Endothelial cell of umbilical vein (primary cell): ENCODE measurements at regions of chr1 and their contacts with region 1.

Region 1: GRCh38 chr1:110495926-110496600 is 22.9 kb downstream of the KCNA10 start:
- DNase-seq: peak; percentile 75
- H3K4me3 ChIP-seq: no peak overlapping the region
- H3K27ac ChIP-seq: no peak overlapping the region
- H3K4me1 ChIP-seq: no peaks in the 10 kb centered on the region
- H3K27me3 ChIP-seq: peaks cover 0 to 7% of the 10 kb centered on the region in 2 experiments
- CTCF ChIP-seq: peak; percentile 77 to 85
- POLR2A ChIP-seq: no peak

Region 2: GRCh38 chr1:109827466-109827865 is 668.6 kb before region 1 on chr1:
- CTCF ChIA-PET with region 1: no interaction called
- POLR2A ChIA-PET with region 1: no interaction called
- dilution Hi-C with region 1: no loop called
- intact Hi-C with region 1: no loop called
- DNase-seq: no peak
- H3K4me3 ChIP-seq: no peak overlapping the region
- H3K27ac ChIP-seq: no peak overlapping the region
- H3K4me1 ChIP-seq: no peaks in the 10 kb centered on the region
- H3K27me3 ChIP-seq: no peaks in the 10 kb centered on the region
- CTCF ChIP-seq: no peak
- POLR2A ChIP-seq: no peak

Region 3: DNA sequence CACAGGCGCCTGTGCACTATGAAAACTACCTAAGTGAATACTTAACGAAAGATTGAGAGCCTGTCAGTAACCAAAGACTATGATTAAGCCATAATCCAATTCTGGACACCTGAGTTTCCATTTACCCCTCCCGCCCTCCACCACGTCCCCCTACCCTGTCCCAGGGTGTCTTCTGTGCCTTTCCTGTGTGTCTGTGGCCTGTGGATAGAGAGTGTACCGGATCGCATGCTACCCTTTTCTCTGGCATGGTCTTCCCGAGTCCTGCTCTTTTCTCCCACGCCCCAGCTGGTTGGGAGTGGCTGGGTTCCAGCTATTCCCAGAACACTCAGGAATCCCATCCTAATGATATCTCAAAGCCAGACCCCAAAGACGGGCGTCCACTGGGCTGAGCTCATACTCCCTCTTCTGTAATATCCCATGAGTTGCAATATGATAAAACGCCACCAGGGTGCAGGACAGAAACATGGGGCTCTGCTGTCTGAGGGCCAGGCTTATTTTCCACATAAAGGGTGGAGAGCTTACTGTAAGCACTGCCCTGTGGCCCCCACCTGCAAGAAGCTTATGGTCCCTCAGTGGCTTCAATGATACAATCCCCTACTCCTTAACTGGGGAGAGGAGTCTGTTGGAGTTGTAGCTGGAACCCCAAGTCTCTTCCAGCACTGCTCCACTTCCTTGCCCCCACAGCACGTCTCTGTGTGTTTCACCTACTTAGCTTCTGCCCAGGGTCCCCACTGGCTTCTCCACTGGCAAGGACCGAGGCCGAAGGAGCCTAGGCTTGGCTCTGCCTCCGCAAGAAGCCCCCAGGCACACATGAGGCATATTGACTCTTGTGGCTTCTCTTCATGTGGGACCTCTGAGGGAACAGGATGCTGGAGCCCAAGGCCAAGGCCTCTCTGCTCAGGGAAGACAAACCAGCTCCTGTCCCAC is 408.0 kb before region 1 on chr1:
- CTCF ChIA-PET with region 1: interaction called, 31 read pairs
- POLR2A ChIA-PET with region 1: no interaction called
- dilution Hi-C with region 1: no loop called
- intact Hi-C with region 1: no loop called
- DNase-seq: peak; percentile 53
- H3K4me3 ChIP-seq: no peak overlapping the region
- H3K27ac ChIP-seq: no peak overlapping the region
- H3K4me1 ChIP-seq: peaks cover 6% of the 10 kb centered on the region
- H3K27me3 ChIP-seq: peaks cover 49% of the 10 kb centered on the region in 2 experiments
- CTCF ChIP-seq: peak; percentile 57 to 66
- POLR2A ChIP-seq: no peak

Region 4: DNA sequence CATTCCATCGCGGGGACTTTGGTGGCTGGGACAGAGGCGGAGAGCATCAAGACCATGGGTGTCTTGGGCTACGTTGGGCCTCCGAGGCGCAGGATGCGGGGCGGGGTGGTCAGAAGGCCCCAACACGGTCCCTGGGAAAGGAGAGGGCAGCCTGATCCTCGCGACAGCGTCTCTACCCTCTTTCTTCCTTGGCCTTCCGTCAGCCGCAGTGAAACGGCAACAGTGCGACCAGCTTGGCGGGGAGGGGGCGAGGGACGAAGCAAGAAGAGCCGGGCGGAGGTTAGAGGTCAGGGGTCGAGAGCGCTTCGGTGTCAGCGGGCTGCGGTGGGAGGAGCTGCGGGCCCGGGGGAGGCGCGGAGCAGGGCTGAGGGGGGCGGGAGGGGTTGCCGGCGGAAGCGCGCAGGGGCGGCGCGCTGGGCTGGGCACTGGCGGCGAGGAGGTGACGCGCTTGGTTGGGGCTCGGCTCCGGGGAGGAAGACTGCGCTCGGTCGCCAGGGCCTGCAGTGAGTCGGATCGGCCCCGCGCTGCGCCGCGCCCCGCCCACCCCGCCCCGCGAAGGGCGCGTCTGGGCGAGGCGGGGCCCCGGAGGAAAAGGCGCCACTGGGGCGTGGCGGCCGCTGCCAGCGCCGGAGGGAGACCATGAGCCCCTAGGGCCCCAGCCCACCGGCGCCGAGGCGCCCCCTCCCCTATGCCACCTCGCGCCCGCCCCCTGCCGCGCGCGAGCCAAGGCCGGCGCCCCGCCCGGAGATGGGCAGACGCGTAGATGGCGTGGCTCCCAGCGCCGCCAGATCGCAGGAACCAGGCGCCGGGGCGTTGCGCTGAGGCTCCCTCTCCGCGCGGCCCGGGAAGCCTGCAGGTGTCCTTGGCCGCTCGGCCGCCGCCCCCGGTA is 286.1 kb before region 1 on chr1 and contains the start of gene KCNC4:
- CTCF ChIA-PET with region 1: interaction called, 136 read pairs
- POLR2A ChIA-PET with region 1: no interaction called
- dilution Hi-C with region 1: no loop called
- intact Hi-C with region 1: no loop called
- DNase-seq: peak; percentile 81
- H3K4me3 ChIP-seq: peak within 1 kb of the TSS; percentile 43 to 65 (median 61)
- H3K27ac ChIP-seq: no peak within 1 kb of the TSS
- H3K4me1 ChIP-seq: peaks cover 5% of the 10 kb centered on the region
- H3K27me3 ChIP-seq: peaks cover 0 to 6% of the 10 kb centered on the region in 2 experiments
- CTCF ChIP-seq: no peak
- POLR2A ChIP-seq: no peak
- total RNA-seq, gene KCNC4: 12.3 and 22.5 TPM in 2 replicates

Region 5: DNA sequence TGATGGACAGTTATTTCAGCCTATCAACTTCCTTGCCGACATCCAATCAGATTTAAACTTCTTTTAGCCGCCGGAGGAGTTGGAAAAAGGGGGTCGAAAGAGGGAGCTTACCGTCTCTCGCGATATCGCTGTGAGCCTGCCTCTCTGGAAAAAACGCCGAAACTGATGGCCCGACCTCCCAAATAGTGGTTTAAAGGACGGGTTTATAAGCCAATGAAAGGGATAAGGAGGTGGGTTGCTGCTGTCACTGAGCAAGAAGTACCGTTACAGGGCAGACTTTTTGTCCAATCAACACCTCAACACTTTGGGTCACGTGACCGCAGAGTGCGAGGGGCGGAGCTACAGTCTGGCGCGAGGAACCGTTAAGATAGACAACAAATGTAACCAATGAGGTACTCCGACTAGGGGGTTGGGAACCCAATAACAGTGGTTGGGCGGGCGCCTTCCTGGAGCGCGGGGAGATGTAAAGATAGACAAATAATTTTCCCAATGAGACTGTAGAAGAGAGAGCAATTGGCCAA is 157.1 kb before region 1 on chr1 and contains the start of gene RBM15:
- CTCF ChIA-PET with region 1: interaction called, 13 read pairs
- POLR2A ChIA-PET with region 1: interaction called, 3 read pairs
- dilution Hi-C with region 1: no loop called
- intact Hi-C with region 1: no loop called
- DNase-seq: peak; percentile 100
- H3K4me3 ChIP-seq: peak within 1 kb of the TSS; percentile 83 to 91 (median 84)
- H3K27ac ChIP-seq: peak within 1 kb of the TSS; percentile 88
- H3K4me1 ChIP-seq: peaks cover 37% of the 10 kb centered on the region
- H3K27me3 ChIP-seq: no peaks in the 10 kb centered on the region
- CTCF ChIP-seq: no peak
- POLR2A ChIP-seq: no peak
- total RNA-seq, gene RBM15: 26.9 and 29.5 TPM in 2 replicates

Region 6: DNA sequence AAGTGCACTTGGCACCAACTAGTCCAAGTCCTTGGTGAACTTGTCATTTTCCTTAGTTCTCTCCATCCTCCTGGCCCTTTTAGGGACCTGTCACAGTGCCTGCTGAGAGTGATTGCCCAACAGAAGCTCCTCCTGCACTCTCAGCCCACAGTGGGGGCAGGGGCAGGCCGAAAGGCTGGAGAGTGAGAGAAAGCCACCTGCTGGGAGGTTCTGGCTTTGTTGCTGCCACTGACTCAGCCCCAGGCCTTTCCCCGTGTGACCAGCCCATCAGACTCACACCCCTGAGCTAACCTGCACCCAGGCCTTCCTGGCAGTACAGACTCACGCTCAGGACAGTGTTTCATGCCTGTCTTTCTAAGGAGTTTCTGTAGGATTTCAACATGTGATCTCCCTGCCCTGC is 62.3 kb before region 1 on chr1:
- CTCF ChIA-PET with region 1: interaction called, 12 read pairs
- POLR2A ChIA-PET with region 1: no interaction called
- dilution Hi-C with region 1: no loop called
- intact Hi-C with region 1: no loop called
- DNase-seq: no peak
- H3K4me3 ChIP-seq: no peak overlapping the region
- H3K27ac ChIP-seq: no peak overlapping the region
- H3K4me1 ChIP-seq: no peaks in the 10 kb centered on the region
- H3K27me3 ChIP-seq: peaks cover 9 to 16% of the 10 kb centered on the region in 2 experiments
- CTCF ChIP-seq: no peak
- POLR2A ChIP-seq: no peak

Region 7: DNA sequence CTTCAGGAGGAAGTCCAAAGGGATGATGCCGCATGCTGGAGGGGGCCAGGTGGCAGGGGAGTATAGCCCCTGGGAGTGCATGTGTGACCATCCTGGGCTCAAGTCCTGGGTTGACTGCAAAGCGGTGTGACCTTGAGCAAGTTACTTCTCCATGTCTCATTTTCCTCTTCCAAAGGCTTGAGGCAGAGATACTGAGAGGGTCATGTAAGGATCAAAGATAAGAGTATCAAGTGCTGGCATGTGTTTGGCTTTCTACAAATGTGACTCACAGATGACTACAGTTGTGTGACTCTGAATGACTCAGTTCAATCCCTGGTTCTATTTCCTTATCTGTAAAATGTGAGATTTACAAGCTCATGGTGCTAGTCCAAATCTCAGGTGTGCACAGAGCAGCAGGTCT is 19.0 kb before region 1 on chr1:
- CTCF ChIA-PET with region 1: interaction called, 68 read pairs
- POLR2A ChIA-PET with region 1: no interaction called
- dilution Hi-C with region 1: no loop called
- intact Hi-C with region 1: no loop called
- DNase-seq: peak; percentile 62
- H3K4me3 ChIP-seq: no peak overlapping the region
- H3K27ac ChIP-seq: no peak overlapping the region
- H3K4me1 ChIP-seq: peaks cover 13% of the 10 kb centered on the region
- H3K27me3 ChIP-seq: peaks cover 0 to 3% of the 10 kb centered on the region in 2 experiments
- CTCF ChIP-seq: no peak
- POLR2A ChIP-seq: no peak

Region 8: GRCh38 chr1:110513511-110513910 is 17.4 kb after region 1 on chr1:
- CTCF ChIA-PET with region 1: interaction called, 17 read pairs
- POLR2A ChIA-PET with region 1: no interaction called
- dilution Hi-C with region 1: no loop called
- intact Hi-C with region 1: no loop called
- DNase-seq: no peak
- H3K4me3 ChIP-seq: no peak overlapping the region
- H3K27ac ChIP-seq: no peak overlapping the region
- H3K4me1 ChIP-seq: no peaks in the 10 kb centered on the region
- H3K27me3 ChIP-seq: peaks cover 0 to 3% of the 10 kb centered on the region in 2 experiments
- CTCF ChIP-seq: no peak
- POLR2A ChIP-seq: no peak